Dorsolateral prefrontal cortex (tissue), 120 donors: ENCODE measurements at regions of chr3 and their contacts with region 1.

Region 1: GRCh38 chr3:65439641-65440284 is 599.0 kb downstream of the MAGI1 start:
- DNase-seq: peak; percentile 43 to 82 (median 61)
- H3K4me3 ChIP-seq: no peak overlapping the region
- H3K27ac ChIP-seq: peak overlapping the region in 12 of 59 donors; percentile 3 to 53 (median 21)
- H3K27me3 ChIP-seq: no peaks in the 10 kb centered on the region
- CTCF ChIP-seq: peak; percentile 29 to 89 (median 75)

Region 2: GRCh38 chr3:64533617-64534317 is 906.0 kb before region 1 on chr3:
- intact Hi-C with region 1: loop called (anchors 5 to 10 kb)
- DNase-seq: peak; percentile 67 to 90 (median 84)
- H3K4me3 ChIP-seq: peak overlapping the region in 50 of 59 donors; percentile 5 to 62 (median 36)
- H3K27ac ChIP-seq: peak overlapping the region in 14 of 59 donors; percentile 7 to 69 (median 36)
- H3K27me3 ChIP-seq: no peaks in the 10 kb centered on the region
- CTCF ChIP-seq: peak; percentile 71 to 96 (median 90)

Region 3: GRCh38 chr3:65483480-65483879 is 43.7 kb after region 1 on chr3:
- intact Hi-C with region 1: loop called in 1 of 2 experiments (anchors 5 kb)
- DNase-seq: peak in 9 of 10 donors; percentile 57 to 80 (median 68)
- H3K4me3 ChIP-seq: peak overlapping the region in 3 of 59 donors; percentile 6 to 9 (median 6)
- H3K27ac ChIP-seq: peak overlapping the region in 3 of 59 donors; percentile 7 to 21 (median 13)
- H3K27me3 ChIP-seq: no peaks in the 10 kb centered on the region
- CTCF ChIP-seq: no peak

Region 4: GRCh38 chr3:65672871-65673815 is 233.4 kb after region 1 on chr3:
- intact Hi-C with region 1: loop called in 1 of 2 experiments (anchors 2 kb)
- DNase-seq: peak; percentile 46 to 76 (median 63)
- H3K4me3 ChIP-seq: no peak overlapping the region
- H3K27ac ChIP-seq: no peak overlapping the region
- H3K27me3 ChIP-seq: no peaks in the 10 kb centered on the region
- CTCF ChIP-seq: peak; percentile 76 to 98 (median 88)

Region 5: GRCh38 chr3:66195347-66195783 is 755.6 kb after region 1 on chr3:
- intact Hi-C with region 1: loop called in 1 of 2 experiments (anchors 10 kb)
- DNase-seq: peak; percentile 60 to 92 (median 78)
- H3K4me3 ChIP-seq: peak overlapping the region; percentile 29 to 71 (median 57)
- H3K27ac ChIP-seq: peak overlapping the region in 7 of 59 donors; percentile 9 to 79 (median 38)
- H3K27me3 ChIP-seq: no peaks in the 10 kb centered on the region
- CTCF ChIP-seq: peak in 53 of 56 donors; percentile 9 to 70 (median 49)